PC-9 (cell line): ENCODE measurements at regions of chr5 and their contacts with region 1.

Region 1: DNA sequence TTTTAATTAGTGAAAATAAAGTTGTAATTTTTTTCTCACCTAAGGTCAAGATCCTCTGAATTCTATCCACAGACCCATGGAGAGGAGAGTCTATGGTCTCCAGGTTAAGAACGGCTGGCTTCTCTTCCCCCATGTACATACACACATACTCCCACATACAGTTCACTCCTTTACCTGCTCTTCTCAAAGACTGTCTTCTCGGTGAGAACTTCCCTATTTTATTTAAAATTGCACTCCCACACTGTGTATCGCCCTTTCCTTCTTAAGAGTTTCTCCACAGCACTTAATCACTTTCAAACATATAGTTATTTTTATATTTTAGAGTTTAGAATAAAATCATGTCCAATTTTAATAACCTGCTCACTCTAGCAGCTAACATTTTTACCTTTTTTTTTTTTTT is 3.6 kb upstream of the JADE2 start:
- DNase-seq: no peak
- H3K4me3 ChIP-seq: no peak overlapping the region
- H3K27ac ChIP-seq: no peak overlapping the region
- H3K4me1 ChIP-seq: peaks cover 9% of the 10 kb centered on the region
- H3K27me3 ChIP-seq: no peaks in the 10 kb centered on the region
- CTCF ChIP-seq: no peak

Region 2: GRCh38 chr5:133968049-133968980 is 553.5 kb before region 1 on chr5 and contains the start of gene C5orf15:
- CTCF ChIA-PET with region 1: no interaction called
- POLR2A ChIA-PET with region 1: no interaction called
- intact Hi-C with region 1: no loop called
- DNase-seq: peak; percentile 87 to 93
- H3K4me3 ChIP-seq: peak within 1 kb of the TSS; percentile 74
- H3K27ac ChIP-seq: peak within 1 kb of the TSS; percentile 32
- H3K4me1 ChIP-seq: peaks cover 16% of the 10 kb centered on the region; the same call in 1 of the 2 replicates
- H3K27me3 ChIP-seq: no peaks in the 10 kb centered on the region
- CTCF ChIP-seq: no peak
- total RNA-seq, gene C5orf15: 24.4 and 45.0 TPM in 2 replicates

Region 3: DNA sequence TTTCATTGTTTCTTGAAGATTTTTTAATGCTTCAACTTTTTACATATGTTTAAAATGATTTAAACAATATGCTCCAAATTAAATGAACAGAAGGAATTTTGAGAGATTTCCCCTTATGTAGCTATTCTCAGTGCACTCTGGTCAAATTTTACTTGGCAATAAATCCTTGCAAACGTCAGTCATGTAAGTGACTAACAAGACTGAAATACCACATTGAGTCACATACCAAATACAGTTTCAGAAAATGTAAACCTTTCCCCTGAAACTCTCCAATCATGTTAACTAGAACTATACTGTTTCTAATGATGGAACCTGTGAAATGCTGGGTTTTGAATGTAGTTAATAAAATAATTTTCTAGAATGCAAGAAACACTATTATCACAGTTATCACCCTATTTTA is 81.2 kb after region 1 on chr5:
- CTCF ChIA-PET with region 1: no interaction called
- POLR2A ChIA-PET with region 1: no interaction called
- intact Hi-C with region 1: no loop called
- DNase-seq: no peak
- H3K4me3 ChIP-seq: no peak overlapping the region
- H3K27ac ChIP-seq: no peak overlapping the region
- H3K4me1 ChIP-seq: no peaks in the 10 kb centered on the region
- H3K27me3 ChIP-seq: no peaks in the 10 kb centered on the region
- CTCF ChIP-seq: no peak

Region 4: GRCh38 chr5:134626369-134627014 is 104.7 kb after region 1 on chr5:
- CTCF ChIA-PET with region 1: no interaction called
- POLR2A ChIA-PET with region 1: interaction called, 10 read pairs
- intact Hi-C with region 1: no loop called
- DNase-seq: peak in 1 of 2 experiments; percentile 85
- H3K4me3 ChIP-seq: no peak overlapping the region
- H3K27ac ChIP-seq: peak overlapping the region; percentile 57
- H3K4me1 ChIP-seq: peaks cover 16% of the 10 kb centered on the region
- H3K27me3 ChIP-seq: no peaks in the 10 kb centered on the region
- CTCF ChIP-seq: no peak

Region 5: DNA sequence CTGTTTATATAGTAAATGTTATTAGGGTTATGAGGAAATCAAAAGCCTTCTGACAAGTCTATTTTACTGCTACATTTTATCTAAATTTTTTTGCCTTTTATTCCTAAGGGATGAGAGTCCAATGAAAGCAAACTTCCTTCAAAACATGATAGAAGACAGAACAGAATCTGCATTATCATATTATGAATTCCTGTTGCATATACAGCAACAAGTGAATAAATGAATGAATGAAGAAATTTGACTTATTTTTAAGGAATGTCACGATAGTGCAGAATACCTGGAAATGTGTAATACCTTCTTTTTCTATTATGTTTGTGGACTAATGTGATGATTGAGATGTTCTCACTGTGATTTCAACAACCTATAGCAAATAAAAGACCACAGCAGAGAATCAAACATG is 203.0 kb after region 1 on chr5:
- CTCF ChIA-PET with region 1: no interaction called
- POLR2A ChIA-PET with region 1: no interaction called
- intact Hi-C with region 1: no loop called
- DNase-seq: no peak
- H3K4me3 ChIP-seq: no peak overlapping the region
- H3K27ac ChIP-seq: no peak overlapping the region
- H3K4me1 ChIP-seq: no peaks in the 10 kb centered on the region
- H3K27me3 ChIP-seq: no peaks in the 10 kb centered on the region
- CTCF ChIP-seq: no peak

Region 6: DNA sequence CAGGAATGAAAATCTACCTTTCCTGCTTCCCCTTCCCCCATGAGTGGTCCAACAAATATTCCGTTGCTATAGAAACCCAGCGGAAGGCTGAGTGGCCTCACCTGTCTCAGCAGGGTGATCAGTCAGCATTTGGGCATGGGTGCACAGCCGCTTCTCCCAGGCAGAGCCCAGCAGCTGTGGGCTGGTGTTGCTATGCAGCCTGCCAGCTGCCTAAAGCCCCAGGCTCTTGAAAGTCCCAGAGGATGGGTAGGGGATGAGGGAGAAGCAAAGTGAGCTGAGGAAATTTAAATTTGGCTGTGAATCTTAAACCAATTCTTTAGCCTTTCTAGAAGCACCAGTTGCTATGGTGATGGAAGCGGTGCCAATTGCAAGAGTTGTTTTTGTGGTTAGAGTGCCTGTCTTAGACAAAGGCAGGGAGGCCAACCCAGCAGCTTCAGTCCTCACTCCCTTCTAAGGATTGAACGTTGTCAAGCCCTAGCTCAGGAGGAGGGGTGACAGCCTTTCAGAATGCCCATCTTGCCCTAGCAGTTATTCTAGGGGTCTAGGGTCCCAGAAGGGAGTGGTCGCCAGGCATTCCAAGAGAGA is 663.7 kb after region 1 on chr5:
- CTCF ChIA-PET with region 1: no interaction called
- POLR2A ChIA-PET with region 1: no interaction called
- intact Hi-C with region 1: no loop called
- DNase-seq: no peak
- H3K4me3 ChIP-seq: no peak overlapping the region
- H3K27ac ChIP-seq: no peak overlapping the region; the same call in 1 of the 2 replicates
- H3K4me1 ChIP-seq: peaks cover 26% of the 10 kb centered on the region
- H3K27me3 ChIP-seq: no peaks in the 10 kb centered on the region
- CTCF ChIP-seq: no peak